CD4-positive, alpha-beta memory T cell (primary cell): ENCODE measurements at regions of chr13 and their contacts with region 1.

Region 1: DNA sequence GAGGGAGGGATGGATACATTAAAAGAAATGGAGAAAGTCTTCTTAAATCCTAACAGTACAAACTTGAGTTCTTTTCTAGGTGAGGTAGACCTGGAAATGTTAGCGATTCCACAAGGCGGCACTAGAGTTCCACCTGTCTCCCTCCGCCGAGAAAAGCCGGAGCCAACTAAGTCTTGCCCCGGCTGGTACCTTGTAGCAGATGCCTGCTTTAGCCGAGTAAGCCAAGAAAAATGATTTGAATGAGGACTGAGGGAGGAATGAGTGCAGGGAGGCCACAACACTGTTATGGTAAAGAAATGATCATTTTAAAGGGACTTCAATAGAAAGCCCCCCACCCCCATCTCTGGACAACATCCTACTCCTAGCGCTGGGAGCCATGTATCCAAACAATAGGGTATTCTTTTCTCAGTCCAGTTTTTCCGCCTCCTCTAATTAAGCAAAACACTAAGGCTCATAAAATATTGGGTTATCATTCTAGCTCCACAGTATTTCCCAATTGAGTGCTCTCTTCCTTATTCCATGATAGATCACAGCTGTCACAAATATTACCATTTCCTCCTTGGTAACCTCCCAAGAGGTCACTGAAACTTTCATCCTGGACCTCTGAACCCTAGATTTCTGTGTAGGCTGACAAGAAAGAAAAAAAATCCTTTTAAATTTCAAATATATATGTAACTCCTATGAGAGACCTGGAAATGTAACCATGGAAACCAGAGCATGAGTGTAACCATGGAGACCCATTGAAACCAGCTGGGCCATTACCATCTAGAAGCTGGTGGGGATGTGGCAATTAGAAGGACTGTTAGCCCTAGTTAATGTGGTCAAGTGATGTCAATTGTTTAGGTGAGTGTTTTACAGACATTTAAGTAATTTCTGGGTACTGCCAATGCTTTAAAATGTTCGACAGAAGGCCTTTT is 58.3 kb downstream of the GPALPP1 start:
- DNase-seq: peak; percentile 68 to 74 (median 72)
- H3K4me3 ChIP-seq: peak overlapping the region in 1 of 2 donors; percentile 31
- H3K4me3 Mint-ChIP-seq: peak overlapping the region; percentile 63 to 87 (median 80)
- H3K27ac ChIP-seq: no peak overlapping the region
- H3K27ac Mint-ChIP-seq: peak overlapping the region in 4 of 7 donors; percentile 20 to 86 (median 47)
- H3K4me1 ChIP-seq: peaks cover 16% of the 10 kb centered on the region
- H3K4me1 Mint-ChIP-seq: peaks cover 9 to 14% (median 10%) of the 10 kb centered on the region in 4 donors
- H3K27me3 ChIP-seq: no peaks in the 10 kb centered on the region
- H3K27me3 Mint-ChIP-seq: peaks cover 5 to 16% of the 10 kb centered on the region in 2 donors

Region 2: DNA sequence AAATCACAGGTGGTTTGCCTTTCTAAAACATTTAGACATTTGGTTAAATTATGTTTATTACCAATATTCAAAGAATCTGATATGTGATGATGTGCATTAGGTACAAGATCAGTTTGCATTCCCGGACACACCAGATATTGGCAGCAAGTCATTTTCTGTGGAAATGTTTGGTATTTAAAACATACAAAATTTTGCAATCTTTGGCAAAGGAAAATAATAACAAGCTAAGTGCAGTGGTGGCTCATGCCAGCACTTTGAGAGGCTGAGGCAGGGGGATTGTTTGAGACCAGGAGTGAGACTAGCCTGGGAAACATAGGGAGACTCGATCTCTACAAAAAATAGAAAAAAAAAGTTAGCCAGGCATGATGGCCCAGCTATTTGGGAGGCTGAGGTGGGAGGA is 442.4 kb before region 1 on chr13:
- CTCF ChIA-PET with region 1: no interaction called
- POLR2A ChIA-PET with region 1: no interaction called
- intact Hi-C with region 1: no loop called
- DNase-seq: no peak
- H3K4me3 ChIP-seq: no peak overlapping the region
- H3K4me3 Mint-ChIP-seq: no peak overlapping the region
- H3K27ac ChIP-seq: no peak overlapping the region
- H3K27ac Mint-ChIP-seq: no peak overlapping the region
- H3K4me1 ChIP-seq: no peaks in the 10 kb centered on the region
- H3K4me1 Mint-ChIP-seq: no peaks in the 10 kb centered on the region
- H3K27me3 ChIP-seq: no peaks in the 10 kb centered on the region
- H3K27me3 Mint-ChIP-seq: peaks cover 6 to 8% of the 10 kb centered on the region in 2 donors

Region 3: DNA sequence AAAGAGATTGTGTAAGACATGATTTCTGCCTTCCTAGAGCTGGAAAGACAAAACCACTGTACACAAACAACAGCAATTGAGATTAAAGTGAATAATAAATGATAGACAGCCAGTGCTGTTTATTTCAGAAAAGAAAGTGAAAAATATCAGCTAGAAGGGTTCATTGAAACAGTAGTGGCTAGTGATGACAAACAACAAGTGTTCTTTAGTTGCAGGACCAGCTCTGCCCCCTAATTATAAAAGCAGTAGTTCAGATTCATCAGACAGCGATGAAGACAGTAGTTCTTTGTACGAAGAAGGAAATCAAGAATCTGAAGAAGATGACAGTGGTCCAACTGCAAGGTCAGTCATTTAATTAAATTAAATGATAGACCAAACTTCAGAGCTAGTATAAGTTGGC is 43.6 kb before region 1 on chr13:
- CTCF ChIA-PET with region 1: no interaction called
- POLR2A ChIA-PET with region 1: no interaction called
- intact Hi-C with region 1: no loop called
- DNase-seq: no peak
- H3K4me3 ChIP-seq: no peak overlapping the region
- H3K4me3 Mint-ChIP-seq: no peak overlapping the region
- H3K27ac ChIP-seq: no peak overlapping the region
- H3K27ac Mint-ChIP-seq: no peak overlapping the region
- H3K4me1 ChIP-seq: no peaks in the 10 kb centered on the region
- H3K4me1 Mint-ChIP-seq: no peaks in the 10 kb centered on the region
- H3K27me3 ChIP-seq: no peaks in the 10 kb centered on the region
- H3K27me3 Mint-ChIP-seq: no peaks in the 10 kb centered on the region

Region 4: GRCh38 chr13:45280751-45281634 is 233.3 kb after region 1 on chr13:
- CTCF ChIA-PET with region 1: interaction called, 30 read pairs
- POLR2A ChIA-PET with region 1: no interaction called
- intact Hi-C with region 1: loop called (anchors 1 kb)
- DNase-seq: peak in 3 of 5 donors; percentile 15 to 26 (median 17)
- H3K4me3 ChIP-seq: no peak overlapping the region
- H3K4me3 Mint-ChIP-seq: no peak overlapping the region
- H3K27ac ChIP-seq: no peak overlapping the region
- H3K27ac Mint-ChIP-seq: no peak overlapping the region
- H3K4me1 ChIP-seq: no peaks in the 10 kb centered on the region
- H3K4me1 Mint-ChIP-seq: peaks cover 0 to 2% (median 0%) of the 10 kb centered on the region in 4 donors
- H3K27me3 ChIP-seq: no peaks in the 10 kb centered on the region
- H3K27me3 Mint-ChIP-seq: no peaks in the 10 kb centered on the region

Region 5: GRCh38 chr13:45310341-45311125 is 262.9 kb after region 1 on chr13:
- CTCF ChIA-PET with region 1: interaction called, 146 read pairs
- POLR2A ChIA-PET with region 1: no interaction called
- intact Hi-C with region 1: loop called (anchors 1 kb)
- DNase-seq: no peak
- H3K4me3 ChIP-seq: peak overlapping the region; percentile 47 to 56
- H3K4me3 Mint-ChIP-seq: peak overlapping the region; percentile 88 to 94 (median 91)
- H3K27ac ChIP-seq: no peak overlapping the region
- H3K27ac Mint-ChIP-seq: peak overlapping the region in 3 of 7 donors; percentile 35 to 87 (median 36)
- H3K4me1 ChIP-seq: peaks cover 19% of the 10 kb centered on the region
- H3K4me1 Mint-ChIP-seq: peaks cover 12 to 22% (median 17%) of the 10 kb centered on the region in 4 donors
- H3K27me3 ChIP-seq: no peaks in the 10 kb centered on the region
- H3K27me3 Mint-ChIP-seq: peaks cover 3 to 5% of the 10 kb centered on the region in 2 donors

Region 6: DNA sequence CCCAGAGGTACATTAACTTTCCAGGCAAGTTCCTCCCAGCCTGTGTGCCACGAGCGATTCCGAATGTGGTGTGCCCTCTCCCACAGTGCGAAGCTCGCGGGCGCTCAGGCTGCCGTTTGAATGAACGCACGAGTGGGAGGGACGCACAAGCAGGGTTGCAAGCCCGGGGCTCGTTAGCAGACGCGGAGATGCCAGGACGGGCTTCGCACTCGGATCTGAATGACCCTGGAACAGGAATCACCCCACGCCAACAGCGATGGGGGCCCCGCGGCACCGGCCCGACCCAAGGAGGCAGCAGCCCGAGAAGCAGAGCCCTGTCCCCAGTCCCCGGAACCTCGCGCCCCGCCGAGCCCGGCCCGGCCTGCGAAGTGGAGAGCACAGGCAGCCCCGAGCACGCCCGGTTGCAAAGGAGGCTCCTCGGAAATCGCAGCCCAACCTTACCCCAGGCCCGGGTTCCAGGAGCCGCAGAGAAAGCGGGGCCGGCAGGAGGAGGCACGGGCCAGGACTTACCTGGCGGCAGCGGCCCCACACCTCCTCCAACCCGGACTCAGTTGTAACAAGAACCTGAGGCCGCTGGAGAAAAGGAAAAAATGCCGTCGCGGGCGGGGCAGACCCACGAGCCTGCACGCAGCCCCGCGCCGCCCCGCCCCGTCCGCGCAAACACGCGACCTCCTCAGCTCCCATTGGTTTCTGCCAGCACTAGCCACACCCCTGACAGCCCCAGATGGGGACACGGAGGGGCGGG is 370.3 kb after region 1 on chr13 and contains the start of gene SLC25A30:
- CTCF ChIA-PET with region 1: interaction called, 4 read pairs
- POLR2A ChIA-PET with region 1: no interaction called
- intact Hi-C with region 1: loop called (anchors 5 kb)
- DNase-seq: peak; percentile 86 to 93 (median 88)
- H3K4me3 ChIP-seq: peak within 1 kb of the TSS; percentile 84 to 94
- H3K4me3 Mint-ChIP-seq: peak within 1 kb of the TSS; percentile 94 to 97 (median 96)
- H3K27ac ChIP-seq: peak within 1 kb of the TSS; percentile 79
- H3K27ac Mint-ChIP-seq: peak within 1 kb of the TSS; percentile 94 to 99 (median 96)
- H3K4me1 ChIP-seq: peaks cover 37% of the 10 kb centered on the region
- H3K4me1 Mint-ChIP-seq: peaks cover 15 to 38% (median 25%) of the 10 kb centered on the region in 4 donors
- H3K27me3 ChIP-seq: no peaks in the 10 kb centered on the region
- H3K27me3 Mint-ChIP-seq: peaks cover 0 to 2% of the 10 kb centered on the region in 2 donors
- total RNA-seq, gene SLC25A30: 21.4 to 22.0 TPM

Region 7: DNA sequence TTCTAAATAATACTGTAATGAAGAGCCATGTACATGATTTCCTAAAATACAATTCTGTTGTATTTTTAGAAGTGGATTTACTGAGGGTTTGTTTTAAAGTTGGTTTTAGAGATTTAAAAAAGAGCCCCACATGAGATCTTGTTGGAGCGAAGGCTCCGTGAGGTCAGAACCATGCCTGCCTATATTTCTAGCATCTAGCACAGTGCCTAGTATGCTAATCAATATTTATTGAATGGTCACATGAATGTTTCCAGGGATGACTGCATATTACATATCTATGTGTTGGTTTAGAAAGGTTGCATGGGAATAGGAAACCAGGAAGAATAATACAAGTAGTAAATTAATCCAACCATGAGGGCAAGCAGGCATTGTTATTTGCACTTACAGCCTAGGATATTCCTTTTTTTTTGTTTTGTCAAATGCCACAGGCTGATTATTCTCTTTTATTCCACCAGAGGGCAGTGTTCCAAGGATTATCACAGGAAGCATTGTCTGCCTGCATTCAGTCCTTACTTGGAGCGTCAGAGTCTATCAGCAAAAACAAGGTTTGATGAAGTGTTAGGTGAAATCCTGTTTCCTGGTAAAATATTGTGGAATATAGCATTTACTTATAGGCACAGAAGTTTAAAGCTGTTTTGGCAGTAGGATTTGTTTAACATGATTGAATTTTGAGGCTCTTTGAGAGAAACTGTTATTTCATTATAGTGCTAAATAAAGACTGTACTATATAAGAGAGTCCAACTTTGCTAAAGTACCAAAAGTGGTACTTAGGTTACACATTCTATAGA is 463.9 kb after region 1 on chr13:
- CTCF ChIA-PET with region 1: interaction called, 5 read pairs
- POLR2A ChIA-PET with region 1: no interaction called
- intact Hi-C with region 1: loop called (anchors 5 kb)
- DNase-seq: peak in 4 of 5 donors; percentile 55 to 68 (median 62)
- H3K4me3 ChIP-seq: no peak overlapping the region
- H3K4me3 Mint-ChIP-seq: no peak overlapping the region
- H3K27ac ChIP-seq: no peak overlapping the region
- H3K27ac Mint-ChIP-seq: peak overlapping the region; percentile 6 to 89 (median 59)
- H3K4me1 ChIP-seq: peaks cover 3% of the 10 kb centered on the region
- H3K4me1 Mint-ChIP-seq: peaks cover 4 to 11% (median 9%) of the 10 kb centered on the region in 4 donors
- H3K27me3 ChIP-seq: no peaks in the 10 kb centered on the region
- H3K27me3 Mint-ChIP-seq: no peaks in the 10 kb centered on the region